ENCODE measurements at regions of chr2 and their contacts with region 1.

Region 1: DNA sequence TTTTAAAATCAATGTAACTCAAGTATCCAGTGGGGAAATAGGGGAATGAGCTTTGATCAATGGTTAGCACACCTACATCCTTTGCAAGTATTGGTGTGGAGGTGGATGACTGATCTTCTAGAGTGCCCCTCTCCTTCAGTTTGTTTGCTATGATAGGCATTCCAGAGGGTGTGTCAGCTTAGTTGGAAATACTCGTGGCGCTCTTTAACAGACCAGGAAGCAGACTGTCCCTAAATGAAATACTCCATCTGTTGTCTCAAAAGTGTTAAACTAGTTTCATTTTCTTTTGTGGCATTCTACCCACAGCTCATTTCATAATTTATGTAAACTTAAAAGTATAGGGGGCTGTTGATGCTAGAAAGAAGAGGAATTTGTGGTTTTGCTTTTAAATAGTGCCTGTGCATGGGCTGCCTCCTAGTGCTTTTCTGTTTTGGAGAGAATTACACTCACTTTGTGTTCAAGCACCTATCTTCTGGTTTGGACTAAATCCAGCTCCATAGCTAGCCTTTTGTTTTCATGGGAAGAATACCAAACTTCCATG is 66.2 kb downstream of the STAT1 start:
- DNase-seq: peak; percentile 60 to 67
- H3K4me3 ChIP-seq: no peak overlapping the region
- H3K4me3 Mint-ChIP-seq: peak overlapping the region; percentile 15
- H3K27ac Mint-ChIP-seq: no peak overlapping the region
- H3K4me1 ChIP-seq: peaks cover 33% of the 10 kb centered on the region
- H3K4me1 Mint-ChIP-seq: peaks cover 7% of the 10 kb centered on the region
- H3K27me3 ChIP-seq: no peaks in the 10 kb centered on the region
- H3K27me3 Mint-ChIP-seq: no peaks in the 10 kb centered on the region
- CTCF ChIP-seq: no peak

Region 2: DNA sequence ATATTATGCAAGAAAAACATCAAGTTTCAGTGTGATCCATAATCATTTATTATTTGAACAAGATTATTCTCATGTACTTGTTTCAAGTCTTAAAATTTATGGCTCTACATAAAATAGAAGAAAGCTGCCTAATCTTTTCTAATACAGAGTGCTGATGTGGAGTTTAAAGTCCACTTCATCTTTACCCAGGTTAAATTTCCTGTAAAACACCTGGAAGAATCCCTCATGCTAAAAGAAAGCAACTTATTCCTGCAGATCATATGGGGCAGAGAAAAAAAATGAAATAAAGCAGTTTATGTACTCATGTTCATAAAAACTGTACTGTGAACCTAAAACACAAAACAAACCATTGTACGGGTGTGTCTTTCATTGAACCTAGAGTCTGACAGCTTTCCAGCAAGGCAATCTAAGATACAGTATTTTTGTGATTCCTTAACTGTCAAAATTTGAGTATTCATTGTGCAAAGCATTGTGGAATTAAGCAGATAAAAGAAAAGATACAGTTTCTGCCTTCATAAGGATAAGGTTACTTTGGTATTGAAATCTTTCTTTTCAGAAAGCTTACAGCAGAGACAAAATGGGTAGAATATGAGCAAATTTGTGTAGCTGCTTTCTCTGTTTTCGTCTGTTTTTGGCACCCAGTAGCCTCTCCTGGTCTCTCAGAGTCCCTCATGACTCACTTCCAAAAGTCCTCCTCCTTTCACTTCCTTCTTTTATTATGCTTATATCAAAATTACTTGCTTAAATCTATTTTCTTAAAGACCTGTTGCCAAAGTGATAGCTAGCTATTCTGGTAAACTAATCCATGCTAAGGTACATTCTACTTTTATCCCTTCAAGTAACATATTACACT is 94.0 kb before region 1 on chr2:
- CTCF ChIA-PET with region 1: no interaction called
- POLR2A ChIA-PET with region 1: no interaction called
- intact Hi-C with region 1: loop called (anchors 2 kb)
- DNase-seq: no peak
- H3K4me3 ChIP-seq: no peak overlapping the region
- H3K4me3 Mint-ChIP-seq: no peak overlapping the region
- H3K27ac Mint-ChIP-seq: no peak overlapping the region
- H3K4me1 ChIP-seq: peaks cover 37% of the 10 kb centered on the region
- H3K4me1 Mint-ChIP-seq: peaks cover 34% of the 10 kb centered on the region
- H3K27me3 ChIP-seq: no peaks in the 10 kb centered on the region
- H3K27me3 Mint-ChIP-seq: no peaks in the 10 kb centered on the region
- CTCF ChIP-seq: no peak

Region 3: DNA sequence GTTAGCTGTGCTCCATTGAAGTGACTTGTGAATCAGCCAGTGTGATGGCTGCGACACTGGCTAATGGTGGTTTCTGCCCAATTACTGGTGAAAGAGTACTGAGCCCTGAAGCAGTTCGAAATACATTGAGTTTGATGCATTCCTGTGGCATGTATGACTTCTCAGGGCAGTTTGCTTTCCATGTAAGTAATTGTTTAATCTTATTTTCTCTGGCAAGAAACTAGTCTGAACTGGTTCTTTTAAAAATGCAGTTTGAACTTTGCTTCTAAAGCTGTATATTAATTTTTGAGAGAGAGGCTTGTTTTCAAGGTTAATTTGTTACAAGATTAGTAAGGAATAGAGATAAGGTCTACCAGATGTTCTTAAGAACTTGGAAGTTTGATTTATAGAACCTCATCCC is 20.5 kb before region 1 on chr2:
- CTCF ChIA-PET with region 1: no interaction called
- POLR2A ChIA-PET with region 1: no interaction called
- intact Hi-C with region 1: loop called (anchors 1 kb)
- DNase-seq: peak; percentile 29 to 53
- H3K4me3 ChIP-seq: no peak overlapping the region
- H3K4me3 Mint-ChIP-seq: no peak overlapping the region
- H3K27ac Mint-ChIP-seq: no peak overlapping the region
- H3K4me1 ChIP-seq: peaks cover 33% of the 10 kb centered on the region
- H3K4me1 Mint-ChIP-seq: peaks cover 12% of the 10 kb centered on the region
- H3K27me3 ChIP-seq: no peaks in the 10 kb centered on the region
- H3K27me3 Mint-ChIP-seq: no peaks in the 10 kb centered on the region
- CTCF ChIP-seq: no peak

Region 4: DNA sequence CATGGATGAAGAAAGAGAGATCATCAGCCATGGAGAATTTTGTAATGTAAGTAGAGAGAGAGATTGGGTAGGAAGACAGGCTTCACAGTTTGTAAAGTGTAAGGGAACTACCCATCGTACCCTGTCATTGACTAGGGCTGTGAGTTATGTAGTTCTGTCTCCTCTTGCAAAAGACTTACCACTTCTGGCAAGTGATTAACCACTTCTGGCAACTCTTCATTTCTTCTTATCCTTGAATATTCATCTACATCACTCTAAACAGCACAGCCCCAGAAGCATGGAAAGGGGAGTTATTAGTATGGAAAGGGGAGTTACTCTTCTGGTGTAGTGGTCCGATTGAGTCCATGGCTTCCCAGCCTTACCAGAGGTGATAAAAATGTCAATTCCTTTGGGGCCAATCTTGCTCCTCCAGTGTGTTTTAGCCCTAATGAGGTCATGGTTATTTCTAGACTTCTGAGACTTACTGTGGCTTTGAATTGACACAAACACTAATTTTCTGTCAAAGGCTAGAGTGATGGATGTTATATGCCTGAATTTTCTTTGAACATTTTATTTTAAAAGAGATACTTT is 14.2 kb after region 1 on chr2:
- CTCF ChIA-PET with region 1: no interaction called
- POLR2A ChIA-PET with region 1: no interaction called
- intact Hi-C with region 1: no loop called
- DNase-seq: no peak
- H3K4me3 ChIP-seq: no peak overlapping the region
- H3K4me3 Mint-ChIP-seq: no peak overlapping the region
- H3K27ac Mint-ChIP-seq: no peak overlapping the region
- H3K4me1 ChIP-seq: no peaks in the 10 kb centered on the region
- H3K4me1 Mint-ChIP-seq: peaks cover 7% of the 10 kb centered on the region
- H3K27me3 ChIP-seq: no peaks in the 10 kb centered on the region
- H3K27me3 Mint-ChIP-seq: no peaks in the 10 kb centered on the region
- CTCF ChIP-seq: no peak

Region 5: DNA sequence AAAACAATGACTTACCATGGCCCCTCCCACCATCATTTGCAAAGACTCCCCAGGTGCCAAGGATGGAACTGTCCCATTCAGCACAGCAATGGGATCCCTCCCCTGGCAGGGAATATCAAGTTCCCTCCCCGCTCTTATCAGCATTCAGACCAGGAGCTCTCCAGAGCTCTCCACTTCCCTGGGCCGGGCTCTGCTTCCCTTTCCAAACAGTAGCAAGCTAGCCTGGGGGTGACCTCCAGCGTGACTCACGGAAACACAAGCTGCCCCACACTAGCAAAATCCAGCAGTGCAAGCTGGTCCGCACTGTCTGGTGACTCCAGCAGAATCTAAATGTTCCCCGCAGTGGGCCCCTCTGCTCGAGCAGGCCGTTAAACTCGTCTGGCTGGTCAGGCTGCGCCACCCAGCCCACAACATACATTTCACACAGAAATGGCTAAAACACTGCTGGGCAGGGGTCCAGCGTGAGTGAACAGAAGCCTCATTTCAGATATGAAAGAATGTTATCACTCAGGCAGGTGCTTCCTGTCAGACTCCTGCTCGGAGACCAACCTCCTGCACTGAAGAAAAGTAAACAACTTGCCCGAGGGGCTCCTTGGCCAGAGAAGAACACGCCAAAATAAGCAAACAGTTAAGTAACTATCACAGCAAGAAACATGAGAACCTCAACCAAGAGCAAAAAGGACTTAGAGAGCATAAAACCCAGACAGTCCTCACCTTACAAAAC is 32.3 kb after region 1 on chr2:
- CTCF ChIA-PET with region 1: no interaction called
- POLR2A ChIA-PET with region 1: interaction called, 3 read pairs
- intact Hi-C with region 1: loop called (anchors 1 kb)
- DNase-seq: peak; percentile 76 to 83
- H3K4me3 ChIP-seq: no peak overlapping the region
- H3K4me3 Mint-ChIP-seq: peak overlapping the region; percentile 32
- H3K27ac Mint-ChIP-seq: peak overlapping the region; percentile 64
- H3K4me1 ChIP-seq: peaks cover 11% of the 10 kb centered on the region
- H3K4me1 Mint-ChIP-seq: peaks cover 23% of the 10 kb centered on the region
- H3K27me3 ChIP-seq: no peaks in the 10 kb centered on the region
- H3K27me3 Mint-ChIP-seq: no peaks in the 10 kb centered on the region
- CTCF ChIP-seq: no peak

Region 6: DNA sequence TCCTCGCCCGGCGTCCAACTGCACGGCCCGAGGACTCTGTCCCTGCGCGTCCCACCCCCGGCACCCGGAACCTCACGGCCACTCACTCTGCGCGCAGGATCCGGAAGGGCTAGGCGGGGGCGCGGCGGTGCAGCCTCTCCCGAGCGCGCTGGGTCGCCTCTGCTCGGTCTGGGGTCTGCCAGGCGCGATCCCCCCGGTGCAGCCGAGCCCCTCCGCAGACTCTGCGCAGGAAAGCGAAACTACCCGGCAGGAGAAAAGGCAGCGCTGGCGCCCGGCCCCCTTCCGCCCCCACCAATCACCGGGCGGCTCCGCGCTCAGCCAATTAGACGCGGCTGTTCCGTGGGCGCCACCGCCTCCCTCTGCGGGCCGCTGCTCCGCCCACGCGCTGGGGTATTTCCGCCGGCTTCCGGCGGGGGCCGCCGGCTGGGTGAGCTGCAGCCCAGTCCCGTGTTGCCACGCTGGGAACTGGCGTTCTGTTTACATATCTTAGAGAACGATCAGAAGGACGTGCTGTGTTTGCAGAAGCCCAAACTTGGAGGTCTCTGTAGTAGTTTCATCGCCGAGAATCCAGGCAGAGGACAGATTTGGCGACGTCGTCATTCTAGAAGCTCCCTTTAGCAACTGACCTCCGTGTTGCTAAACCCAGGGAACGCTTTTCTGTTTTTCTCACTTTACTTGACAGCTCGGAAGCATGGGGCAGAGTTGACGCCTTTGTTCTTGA is 66.3 kb after region 1 on chr2 and contains the start of gene STAT1:
- CTCF ChIA-PET with region 1: no interaction called
- POLR2A ChIA-PET with region 1: no interaction called
- intact Hi-C with region 1: loop called (anchors 1 kb)
- DNase-seq: peak; percentile 90 to 98
- H3K4me3 ChIP-seq: peak within 1 kb of the TSS; percentile 72
- H3K4me3 Mint-ChIP-seq: no peak within 1 kb of the TSS
- H3K27ac Mint-ChIP-seq: no peak within 1 kb of the TSS
- H3K4me1 ChIP-seq: peaks cover 14% of the 10 kb centered on the region
- H3K4me1 Mint-ChIP-seq: no peaks in the 10 kb centered on the region
- H3K27me3 ChIP-seq: no peaks in the 10 kb centered on the region
- H3K27me3 Mint-ChIP-seq: no peaks in the 10 kb centered on the region
- CTCF ChIP-seq: peak; percentile 13 to 23
- total RNA-seq, gene STAT1: 113 and 126 TPM in 2 replicates

Measured in Caco-2 (cell line).